PC-3 (cell line): ENCODE measurements at regions of chr5 and their contacts with region 1.

Region 1: DNA sequence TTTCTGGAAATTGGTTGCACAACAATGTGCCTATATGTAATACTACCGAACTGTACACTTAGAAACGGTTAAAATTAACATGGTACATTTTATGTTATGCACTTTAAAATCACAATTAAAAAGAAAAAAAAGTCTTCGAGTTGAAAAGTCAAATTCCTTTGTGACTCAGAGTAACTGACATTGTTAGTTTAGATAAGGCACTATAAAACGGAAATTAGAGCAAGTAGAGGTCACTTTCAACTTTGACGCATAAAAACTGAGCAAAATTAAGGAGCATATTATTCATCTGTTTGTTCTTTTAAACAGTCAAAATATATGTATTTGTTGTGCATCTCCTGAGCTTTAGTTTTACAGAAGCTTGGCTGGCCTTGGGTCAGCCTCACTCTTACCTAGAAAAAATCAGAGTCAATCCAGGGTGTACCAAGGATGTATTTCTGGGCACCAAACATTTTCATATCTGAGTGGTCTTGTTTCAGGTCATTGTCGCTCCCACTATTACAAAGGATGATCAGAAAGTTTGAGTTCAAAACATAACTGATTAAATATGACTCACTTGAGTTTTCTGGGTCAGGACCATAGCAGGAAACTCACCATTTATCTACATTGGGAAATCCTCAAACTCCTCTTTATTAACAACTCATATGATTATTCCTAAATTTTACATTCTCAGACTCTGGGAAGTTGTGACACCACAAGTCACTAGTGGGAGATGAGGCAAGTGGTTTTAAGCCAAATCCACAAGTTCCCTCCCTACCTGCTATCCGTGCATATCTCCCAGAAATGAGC is 160.6 kb downstream of the CCDC192 start:
- DNase-seq: peak; percentile 67
- ATAC-seq: peak; percentile 70
- H3K4me3 ChIP-seq: no peak overlapping the region
- H3K27ac ChIP-seq: peak overlapping the region; percentile 68
- H3K4me1 ChIP-seq: peaks cover 18% of the 10 kb centered on the region
- H3K27me3 ChIP-seq: no peaks in the 10 kb centered on the region
- CTCF ChIP-seq: no peak

Region 2: DNA sequence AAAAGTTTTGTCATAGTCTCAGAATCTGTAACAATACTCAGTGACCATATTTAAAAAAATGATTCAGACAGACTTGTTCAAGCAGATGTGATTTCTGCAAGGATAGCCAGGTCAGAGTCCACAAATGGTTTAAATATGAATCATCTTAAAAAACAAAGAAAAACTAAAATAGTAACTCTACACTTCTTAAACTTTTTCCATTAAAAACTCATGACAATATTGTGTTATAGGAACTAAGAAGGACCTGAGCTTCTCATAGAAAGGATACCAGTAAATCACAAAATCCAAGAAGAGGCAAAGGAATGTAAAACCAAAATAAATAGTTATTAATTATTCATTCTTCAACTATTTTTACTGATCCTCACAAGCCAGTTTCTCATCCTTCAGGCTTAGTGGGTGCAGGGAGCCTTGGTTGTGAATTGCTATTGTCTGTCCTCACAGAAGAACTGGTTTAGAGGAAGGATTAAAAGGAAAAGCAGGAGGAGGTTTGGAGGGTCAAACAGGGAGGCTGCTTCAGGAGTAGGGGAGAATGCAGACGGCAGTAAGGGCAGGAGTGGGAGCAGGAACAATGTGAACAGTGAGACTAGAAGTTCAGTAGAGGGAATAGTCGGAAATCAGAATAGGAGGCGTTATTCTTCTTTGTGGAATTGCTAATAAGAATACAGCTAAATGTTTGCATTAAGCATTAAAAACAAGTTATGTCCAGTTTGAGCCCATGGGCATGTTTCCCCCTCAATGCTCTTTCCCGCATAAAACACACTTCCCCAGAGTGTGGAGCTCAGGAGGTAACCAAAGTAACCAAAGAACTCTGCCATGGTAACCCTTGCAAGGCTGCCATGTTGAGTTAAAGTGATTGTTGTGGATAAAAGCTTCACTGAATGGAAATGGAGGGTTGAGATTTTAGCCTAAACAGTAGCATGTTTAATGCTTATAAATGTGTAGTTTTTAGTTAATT is 49.9 kb before region 1 on chr5:
- CTCF ChIA-PET with region 1: no interaction called
- POLR2A ChIA-PET with region 1: no interaction called
- intact Hi-C with region 1: loop called (anchors 2 kb)
- DNase-seq: peak; percentile 83
- ATAC-seq: peak; percentile 90
- H3K4me3 ChIP-seq: peak overlapping the region; percentile 17; the same call in 1 of the 2 replicates
- H3K27ac ChIP-seq: peak overlapping the region; percentile 73
- H3K4me1 ChIP-seq: peaks cover 36% of the 10 kb centered on the region
- H3K27me3 ChIP-seq: no peaks in the 10 kb centered on the region
- CTCF ChIP-seq: no peak

Region 3: GRCh38 chr5:127849891-127850290 is 13.9 kb before region 1 on chr5:
- CTCF ChIA-PET with region 1: no interaction called
- POLR2A ChIA-PET with region 1: no interaction called
- intact Hi-C with region 1: loop called (anchors 1 kb)
- DNase-seq: no peak
- ATAC-seq: no peak; the same call in 1 of the 2 replicates
- H3K4me3 ChIP-seq: no peak overlapping the region
- H3K27ac ChIP-seq: peak overlapping the region; percentile 21
- H3K4me1 ChIP-seq: peaks cover 22% of the 10 kb centered on the region
- H3K27me3 ChIP-seq: no peaks in the 10 kb centered on the region
- CTCF ChIP-seq: no peak